H1 (cell line): ENCODE measurements at regions of chr3 and their contacts with region 1.

Region 1: DNA sequence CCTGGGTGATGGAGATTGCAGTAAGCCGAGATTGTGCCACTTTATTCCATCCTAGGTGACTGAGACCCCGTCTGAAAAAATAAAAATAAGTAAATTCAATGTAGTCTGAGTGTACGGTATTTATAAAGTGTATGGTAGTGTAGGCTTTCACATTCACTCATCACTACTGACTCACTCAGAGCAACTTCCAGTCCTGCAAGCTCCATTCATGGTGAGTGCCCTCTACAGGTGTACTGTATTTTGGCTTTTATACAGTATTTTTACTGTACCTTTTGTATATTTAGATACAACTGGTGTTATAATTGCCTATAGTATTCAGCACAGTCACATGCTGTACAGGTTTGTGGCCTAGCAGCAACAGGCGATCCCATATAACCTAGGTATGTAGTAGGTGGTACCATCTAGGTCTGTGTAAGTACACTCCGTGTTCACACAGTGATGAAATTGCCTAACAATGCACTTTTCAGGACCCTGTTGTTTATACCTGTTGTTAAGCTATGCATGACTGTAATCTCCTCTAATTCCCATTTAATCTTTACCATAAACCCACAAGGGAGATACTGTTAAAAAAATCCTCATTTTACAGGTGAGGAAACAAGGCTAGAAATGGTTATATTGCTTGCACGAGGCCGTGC is 19.3 kb downstream of the CACNA1D start:
- DNase-seq: no peak
- H3K4me3 ChIP-seq: no peak overlapping the region
- H3K27ac ChIP-seq: no peak overlapping the region
- H3K4me1 ChIP-seq: peaks cover 0 to 3% (median under 1%) of the 10 kb centered on the region in 4 experiments; a peak in 2 of 7 replicates
- H3K27me3 ChIP-seq: peaks cover 0 to 5% (median 2%) of the 10 kb centered on the region in 4 experiments; a peak in 3 of 7 replicates
- CTCF ChIP-seq: peak in 1 of 3 experiments; percentile 37; a peak in 1 of 4 replicates
- EP300 ChIP-seq: no peak
- POLR2A ChIP-seq: no peak
- RAD21 ChIP-seq: 0 out of 4 replicates have a peak, but pooled peaks of 1 of the 2 experiments have one; percentile 11

Region 2: DNA sequence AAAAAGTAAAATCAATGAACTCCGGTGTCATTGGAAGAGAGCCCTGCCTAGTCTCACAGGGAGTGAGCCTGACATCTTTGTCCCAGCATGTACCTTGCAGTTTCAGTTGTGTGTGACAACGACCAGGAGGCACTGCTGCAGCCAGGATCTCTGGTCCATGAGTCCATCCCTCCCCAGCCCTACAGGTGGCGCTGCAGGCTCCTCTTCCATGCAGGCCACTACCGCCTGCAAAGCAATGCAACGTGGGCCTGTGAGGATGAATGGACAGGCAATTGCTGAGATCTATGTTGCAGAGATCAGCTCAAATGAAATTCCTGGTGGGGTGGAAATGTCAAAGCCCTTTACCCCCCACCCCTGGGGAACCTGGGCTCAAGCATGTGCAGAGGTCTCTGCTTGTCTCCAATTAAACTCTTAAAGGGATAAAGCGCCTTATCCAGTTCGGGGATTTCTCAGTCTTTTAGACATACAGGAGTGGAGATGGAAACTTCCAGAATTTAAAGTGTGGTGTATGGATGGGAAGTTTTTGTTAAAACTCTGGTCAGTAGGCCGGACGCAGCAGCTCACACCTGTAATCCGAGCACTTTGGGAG is 293.7 kb before region 1 on chr3:
- CTCF ChIA-PET with region 1: no interaction called
- POLR2A ChIA-PET with region 1: no interaction called
- DNase-seq: peak; percentile 78 to 97
- H3K4me3 ChIP-seq: no peak overlapping the region
- H3K27ac ChIP-seq: no peak overlapping the region
- H3K4me1 ChIP-seq: peaks cover 0 to 2% (median 0%) of the 10 kb centered on the region in 4 experiments; a peak in 1 of 7 replicates
- H3K27me3 ChIP-seq: no peaks in the 10 kb centered on the region
- CTCF ChIP-seq: peak in 2 of 3 experiments; percentile 97 to 98; a peak in 3 of 4 replicates
- EP300 ChIP-seq: no peak
- POLR2A ChIP-seq: peak in 1 of 2 experiments; percentile 27; a peak in 1 of 3 replicates
- RAD21 ChIP-seq: peak; percentile 85 to 89

Region 3: DNA sequence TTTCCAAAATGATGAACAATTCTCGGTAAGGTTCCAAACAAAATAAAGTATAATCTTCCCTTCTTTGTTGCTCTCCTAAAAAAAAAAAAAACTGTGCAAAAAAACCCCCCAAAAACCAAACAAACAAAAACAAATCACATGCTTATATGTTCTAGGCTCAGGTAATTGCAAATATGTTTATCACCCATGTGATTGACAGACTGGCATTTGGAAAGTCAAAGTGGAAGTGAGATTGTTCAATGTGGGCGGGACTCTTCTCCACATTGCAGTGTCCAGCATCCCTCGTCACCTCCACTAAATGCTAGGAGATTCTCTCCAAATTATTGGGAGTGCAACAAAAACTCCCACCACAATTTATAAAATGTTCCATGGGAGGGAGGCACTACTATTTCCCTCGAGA is 76.8 kb before region 1 on chr3:
- CTCF ChIA-PET with region 1: no interaction called
- POLR2A ChIA-PET with region 1: no interaction called
- DNase-seq: no peak
- H3K4me3 ChIP-seq: no peak overlapping the region
- H3K27ac ChIP-seq: no peak overlapping the region
- H3K4me1 ChIP-seq: no peaks in the 10 kb centered on the region
- H3K27me3 ChIP-seq: no peaks in the 10 kb centered on the region
- CTCF ChIP-seq: no peak
- EP300 ChIP-seq: no peak
- POLR2A ChIP-seq: no peak
- RAD21 ChIP-seq: no peak

Region 4: GRCh38 chr3:53502737-53503136 is 10.9 kb before region 1 on chr3:
- CTCF ChIA-PET with region 1: interaction called, 23 read pairs
- POLR2A ChIA-PET with region 1: no interaction called
- DNase-seq: no peak
- H3K4me3 ChIP-seq: no peak overlapping the region
- H3K27ac ChIP-seq: no peak overlapping the region
- H3K4me1 ChIP-seq: no peaks in the 10 kb centered on the region; a peak in 2 of 7 replicates
- H3K27me3 ChIP-seq: no peaks in the 10 kb centered on the region; a peak in 1 of 7 replicates
- CTCF ChIP-seq: no peak
- EP300 ChIP-seq: no peak
- POLR2A ChIP-seq: no peak
- RAD21 ChIP-seq: no peak

Region 5: GRCh38 chr3:53525765-53526703 is 12.4 kb after region 1 on chr3:
- CTCF ChIA-PET with region 1: interaction called, 21 read pairs
- POLR2A ChIA-PET with region 1: no interaction called
- DNase-seq: no peak
- H3K4me3 ChIP-seq: no peak overlapping the region
- H3K27ac ChIP-seq: no peak overlapping the region
- H3K4me1 ChIP-seq: no peaks in the 10 kb centered on the region; a peak in 1 of 7 replicates
- H3K27me3 ChIP-seq: no peaks in the 10 kb centered on the region
- CTCF ChIP-seq: no peak
- EP300 ChIP-seq: no peak
- POLR2A ChIP-seq: no peak
- RAD21 ChIP-seq: no peak